Caco-2 (cell line): ENCODE measurements at regions of chr2 and their contacts with region 1.

Region 1: GRCh38 chr2:215063526-215063925 is 74.9 kb downstream of the ABCA12 start:
- DNase-seq: no peak
- H3K4me3 ChIP-seq: no peak overlapping the region
- H3K4me3 Mint-ChIP-seq: no peak overlapping the region
- H3K27ac Mint-ChIP-seq: no peak overlapping the region
- H3K4me1 ChIP-seq: no peaks in the 10 kb centered on the region
- H3K4me1 Mint-ChIP-seq: no peaks in the 10 kb centered on the region
- H3K27me3 ChIP-seq: no peaks in the 10 kb centered on the region
- H3K27me3 Mint-ChIP-seq: peaks cover 6% of the 10 kb centered on the region
- CTCF ChIP-seq: no peak

Region 2: DNA sequence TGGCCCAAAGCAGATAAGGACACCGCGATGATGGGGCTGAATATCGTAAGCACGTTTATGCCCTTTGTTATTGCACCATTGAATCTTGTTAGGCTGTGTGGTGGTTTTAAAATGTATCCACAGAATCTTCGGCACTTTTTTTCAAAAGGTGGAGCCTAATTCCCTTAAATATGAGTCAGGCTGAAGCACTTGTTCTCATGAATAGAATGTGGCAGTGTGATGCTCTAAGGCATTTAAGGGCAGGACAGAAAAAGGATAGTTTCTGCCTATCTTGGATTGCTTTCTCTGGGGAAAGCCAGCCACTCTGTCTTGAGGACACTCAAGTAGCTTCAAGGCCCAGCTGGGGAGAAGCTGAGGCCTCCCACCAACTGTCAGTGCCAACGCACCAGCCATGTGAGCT is 35.3 kb after region 1 on chr2:
- CTCF ChIA-PET with region 1: no interaction called
- POLR2A ChIA-PET with region 1: no interaction called
- intact Hi-C with region 1: loop called (anchors 1 kb)
- DNase-seq: no peak
- H3K4me3 ChIP-seq: no peak overlapping the region
- H3K4me3 Mint-ChIP-seq: no peak overlapping the region
- H3K27ac Mint-ChIP-seq: no peak overlapping the region
- H3K4me1 ChIP-seq: no peaks in the 10 kb centered on the region
- H3K4me1 Mint-ChIP-seq: no peaks in the 10 kb centered on the region
- H3K27me3 ChIP-seq: no peaks in the 10 kb centered on the region
- H3K27me3 Mint-ChIP-seq: peaks cover 5% of the 10 kb centered on the region
- CTCF ChIP-seq: no peak

Region 3: DNA sequence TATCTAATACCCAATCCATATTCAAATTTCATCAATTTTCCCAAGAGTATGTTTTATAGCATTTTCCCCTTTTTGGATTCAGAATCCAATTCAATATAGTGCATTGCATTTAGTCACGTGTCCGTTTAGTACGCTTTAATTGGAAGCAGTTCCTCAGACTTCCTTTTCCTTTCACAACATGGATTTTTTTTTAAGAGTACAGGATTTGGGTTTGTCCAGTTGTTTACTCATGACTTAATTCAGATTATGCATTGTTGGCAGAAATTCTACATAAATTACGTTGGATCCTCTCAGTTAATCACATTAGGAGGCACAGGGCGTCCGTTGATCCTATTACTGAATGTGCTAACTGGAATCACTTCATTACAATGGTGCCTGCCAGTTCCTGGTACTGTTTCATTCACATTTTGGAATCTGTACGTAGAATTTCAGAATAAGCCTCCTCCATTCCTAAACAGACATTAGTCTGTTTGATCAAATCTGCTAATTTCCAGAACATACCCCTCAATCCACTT is 178.3 kb after region 1 on chr2:
- CTCF ChIA-PET with region 1: no interaction called
- POLR2A ChIA-PET with region 1: no interaction called
- intact Hi-C with region 1: no loop called
- DNase-seq: no peak
- H3K4me3 ChIP-seq: no peak overlapping the region
- H3K4me3 Mint-ChIP-seq: no peak overlapping the region
- H3K27ac Mint-ChIP-seq: no peak overlapping the region
- H3K4me1 ChIP-seq: no peaks in the 10 kb centered on the region
- H3K4me1 Mint-ChIP-seq: no peaks in the 10 kb centered on the region
- H3K27me3 ChIP-seq: no peaks in the 10 kb centered on the region
- H3K27me3 Mint-ChIP-seq: peaks cover 8% of the 10 kb centered on the region
- CTCF ChIP-seq: no peak

Region 4: GRCh38 chr2:215460682-215461382 is 397.3 kb after region 1 on chr2:
- CTCF ChIA-PET with region 1: no interaction called
- POLR2A ChIA-PET with region 1: no interaction called
- intact Hi-C with region 1: no loop called
- DNase-seq: no peak
- H3K4me3 ChIP-seq: no peak overlapping the region
- H3K4me3 Mint-ChIP-seq: no peak overlapping the region
- H3K27ac Mint-ChIP-seq: no peak overlapping the region
- H3K4me1 ChIP-seq: peaks cover 18% of the 10 kb centered on the region
- H3K4me1 Mint-ChIP-seq: no peaks in the 10 kb centered on the region
- H3K27me3 ChIP-seq: no peaks in the 10 kb centered on the region
- H3K27me3 Mint-ChIP-seq: no peaks in the 10 kb centered on the region
- CTCF ChIP-seq: no peak